Right ventricle myocardium superior (tissue), 1 donor: ENCODE measurements at regions of chr14 and their contacts with region 1.

Region 1: GRCh38 chr14:32252030-32252670 is 49.1 kb upstream of the RNU6-8 start:
- DNase-seq: no peak
- ATAC-seq: peak; percentile 79

Region 2: GRCh38 chr14:31505411-31505810 is 746.7 kb before region 1 on chr14:
- intact Hi-C with region 1: loop called (anchors 5 kb)
- DNase-seq: no peak
- ATAC-seq: peak; percentile 76

Region 3: DNA sequence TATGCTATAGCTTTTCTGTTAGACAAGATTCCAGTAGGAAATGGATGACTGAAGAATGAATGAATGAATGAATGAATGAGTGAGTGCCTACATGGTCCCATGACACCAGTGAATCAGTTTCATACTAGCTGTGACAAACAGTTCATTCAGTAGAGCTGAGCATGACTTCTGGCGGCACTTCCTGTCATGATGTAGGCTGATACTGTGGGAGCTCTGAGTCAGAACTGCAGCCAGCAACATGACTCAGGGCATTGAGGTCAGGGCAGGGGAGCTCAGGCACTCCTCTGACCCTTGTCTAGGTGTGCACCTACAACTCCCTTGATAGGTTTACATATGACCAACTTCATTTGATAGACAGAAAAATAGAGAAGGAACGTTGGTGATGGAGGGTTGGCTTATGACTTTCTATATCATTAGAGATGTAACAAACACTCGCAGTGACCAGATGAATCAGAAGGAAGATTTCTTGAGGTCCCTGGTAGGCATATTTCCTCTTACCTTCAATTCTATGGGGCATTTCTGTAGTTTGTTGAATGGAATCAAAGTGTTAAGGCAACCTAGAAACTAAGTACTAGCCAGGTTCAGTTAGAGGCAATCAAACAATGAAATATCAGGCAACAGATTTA is 314.3 kb before region 1 on chr14:
- intact Hi-C with region 1: loop called (anchors 5 kb)
- DNase-seq: no peak
- ATAC-seq: peak; percentile 69

Region 4: DNA sequence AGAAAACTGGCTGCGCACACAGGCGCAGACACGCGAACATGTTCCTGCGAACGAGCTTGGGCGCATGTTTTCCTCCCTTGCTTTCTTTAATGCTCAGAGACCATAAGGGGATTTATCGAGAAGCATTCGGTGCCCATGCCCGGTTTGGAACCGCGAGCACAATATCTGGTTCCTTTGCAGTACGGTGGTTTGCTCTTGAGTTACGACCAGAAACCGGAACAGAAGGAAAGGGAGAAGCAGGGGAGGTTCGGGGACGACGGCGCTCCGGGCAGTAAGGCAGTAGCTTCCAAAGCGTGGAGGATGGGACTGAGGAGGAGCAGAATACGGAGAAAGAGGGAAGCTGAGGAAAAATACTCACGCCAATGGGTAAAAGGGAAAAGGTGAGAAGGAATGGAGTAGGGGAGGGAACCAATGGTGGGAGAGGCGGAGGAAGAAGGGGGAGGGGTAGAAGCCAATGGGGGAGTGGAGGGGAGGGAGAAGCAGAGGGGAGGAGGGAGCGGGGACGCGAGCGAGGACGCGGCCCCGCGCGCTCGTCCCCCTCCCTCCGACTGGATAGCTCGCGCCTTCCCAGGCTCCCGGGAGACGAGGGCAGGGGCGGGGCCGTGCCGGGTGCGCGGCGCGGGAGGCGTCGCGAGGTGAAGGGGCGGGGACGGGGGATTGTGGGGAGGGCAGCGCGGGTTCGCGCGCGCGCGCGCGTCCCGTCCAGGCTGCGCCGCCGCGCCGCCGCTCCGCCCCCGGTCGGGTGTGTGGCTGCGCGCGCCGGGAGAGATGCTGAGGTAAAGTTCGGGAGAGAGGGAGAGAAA is 175.7 kb before region 1 on chr14:
- intact Hi-C with region 1: loop called (anchors 2 kb)
- DNase-seq: peak; percentile 97
- ATAC-seq: peak; percentile 92

Region 5: GRCh38 chr14:32300136-32300535 is 48.0 kb after region 1 on chr14:
- intact Hi-C with region 1: no loop called
- DNase-seq: no peak
- ATAC-seq: peak; percentile 63

Region 6: GRCh38 chr14:32453857-32454810 is 202.0 kb after region 1 on chr14:
- intact Hi-C with region 1: no loop called
- DNase-seq: no peak
- ATAC-seq: peak; percentile 30

Region 7: DNA sequence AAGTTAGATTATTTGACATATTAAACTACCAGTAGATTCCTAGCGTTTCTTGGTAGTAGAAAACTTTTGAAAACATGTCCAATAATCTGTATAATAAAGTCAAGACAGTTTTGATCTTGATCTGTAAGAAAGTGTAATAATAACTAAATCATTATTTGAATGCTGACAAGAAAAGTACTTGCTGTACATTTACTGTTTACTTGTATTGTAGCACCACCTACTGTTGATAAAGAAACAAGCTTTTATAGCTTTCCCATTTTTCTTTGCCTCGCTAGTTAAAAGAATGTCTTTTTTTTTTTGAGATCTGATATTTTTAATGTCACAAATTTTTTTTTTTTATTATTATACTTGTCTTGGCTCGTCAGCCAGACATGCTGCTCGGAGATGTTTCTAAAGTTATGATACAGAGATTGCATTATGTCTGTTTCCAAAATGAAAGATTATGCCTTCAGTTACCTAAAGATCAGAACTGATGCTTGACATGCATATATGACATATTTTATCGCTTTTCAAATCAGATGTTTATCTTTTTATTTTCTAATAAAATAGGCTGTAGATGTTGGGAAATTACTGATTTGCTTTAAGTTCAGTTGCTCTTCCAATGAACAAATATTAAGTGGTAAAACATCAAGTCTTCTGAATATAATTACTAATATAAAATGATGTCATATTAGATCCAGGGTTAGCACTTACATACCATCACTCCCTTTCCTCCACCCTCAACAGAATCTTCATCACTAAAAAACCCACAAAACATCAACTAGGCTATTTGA is 217.4 kb after region 1 on chr14:
- intact Hi-C with region 1: loop called (anchors 10 kb)
- DNase-seq: no peak
- ATAC-seq: peak; percentile 58